AG04449 (cell line): ENCODE measurements at regions of chr17 and their contacts with region 1.

Region 1: GRCh38 chr17:17812211-17813057 is 24.4 kb downstream of the SREBF1 start:
- DNase-seq: no peak
- H3K4me3 ChIP-seq: no peak overlapping the region
- CTCF ChIP-seq: peak; percentile 90

Region 2: DNA sequence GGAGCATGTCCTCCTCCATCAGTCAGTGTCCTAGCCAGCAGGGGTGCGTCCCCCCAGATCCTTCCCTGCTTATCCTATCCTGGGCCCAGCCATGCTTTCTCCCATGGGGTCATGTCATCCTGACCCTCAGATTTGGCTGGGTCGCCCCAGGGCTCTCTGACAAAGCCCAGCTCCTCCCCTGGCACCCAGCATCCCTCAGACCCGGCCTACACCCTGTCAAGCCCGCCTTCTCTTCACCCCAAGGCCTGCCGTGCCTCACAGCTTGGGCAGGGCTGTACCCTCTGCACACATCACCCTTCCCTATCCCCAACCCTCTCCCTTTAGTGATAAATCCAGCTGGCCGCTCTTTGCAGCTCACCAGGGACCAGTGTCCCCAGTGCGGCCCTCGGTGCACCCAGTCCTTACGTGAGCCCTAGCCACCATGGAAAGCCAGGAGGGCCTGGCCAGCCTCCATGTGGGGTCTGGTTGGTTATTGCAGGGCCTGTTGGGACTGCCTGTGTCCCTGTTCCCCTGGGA is 56.8 kb before region 1 on chr17:
- CTCF ChIA-PET with region 1: no interaction called
- POLR2A ChIA-PET with region 1: no interaction called
- DNase-seq: no peak
- H3K4me3 ChIP-seq: no peak overlapping the region
- CTCF ChIP-seq: no peak

Region 3: GRCh38 chr17:17781591-17782496 is 30.6 kb before region 1 on chr17:
- CTCF ChIA-PET with region 1: interaction called, 14 read pairs
- POLR2A ChIA-PET with region 1: no interaction called
- DNase-seq: no peak
- H3K4me3 ChIP-seq: peak overlapping the region; percentile 43
- CTCF ChIP-seq: no peak

Region 4: GRCh38 chr17:17823433-17824118 is 11.1 kb after region 1 on chr17:
- CTCF ChIA-PET with region 1: interaction called, 37 read pairs
- POLR2A ChIA-PET with region 1: no interaction called
- DNase-seq: no peak
- H3K4me3 ChIP-seq: peak overlapping the region; percentile 53
- CTCF ChIP-seq: no peak

Region 5: DNA sequence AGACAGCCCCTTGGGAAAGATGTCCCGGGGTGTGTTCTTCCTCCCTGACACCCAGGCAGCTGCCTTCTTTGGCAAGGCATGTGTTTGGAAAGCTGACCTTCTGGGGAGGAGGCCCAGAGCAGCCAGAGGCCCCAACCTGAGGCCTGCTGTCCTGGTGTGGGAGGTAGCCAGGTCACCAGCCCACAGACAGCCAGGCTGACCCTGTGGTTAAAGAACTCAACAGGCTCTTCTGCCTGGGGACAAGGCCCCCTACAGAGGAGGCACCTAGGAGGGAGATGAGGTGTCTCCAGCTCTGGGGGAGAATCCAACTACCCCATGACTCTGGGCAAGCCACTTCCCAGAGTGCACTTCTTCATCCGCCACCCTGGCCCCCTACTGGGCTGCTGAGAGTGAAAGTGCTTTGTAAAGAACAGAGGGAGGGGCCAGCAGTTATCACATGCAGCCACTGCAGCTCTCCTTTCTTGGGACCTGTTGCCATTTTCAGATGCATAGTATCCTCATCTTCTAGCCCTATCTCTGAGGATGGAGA is 37.5 kb after region 1 on chr17:
- CTCF ChIA-PET with region 1: interaction called, 14 read pairs
- POLR2A ChIA-PET with region 1: no interaction called
- DNase-seq: no peak
- H3K4me3 ChIP-seq: no peak overlapping the region
- CTCF ChIP-seq: peak; percentile 30